GM10248 (cell line): ENCODE measurements at regions of chr5 and their contacts with region 1.

Region 1: GRCh38 chr5:107673368-107674136 is 2.8 kb upstream of the EFNA5 start:
- DNase-seq: peak; percentile 81
- CTCF ChIP-seq: peak; percentile 100

Region 2: DNA sequence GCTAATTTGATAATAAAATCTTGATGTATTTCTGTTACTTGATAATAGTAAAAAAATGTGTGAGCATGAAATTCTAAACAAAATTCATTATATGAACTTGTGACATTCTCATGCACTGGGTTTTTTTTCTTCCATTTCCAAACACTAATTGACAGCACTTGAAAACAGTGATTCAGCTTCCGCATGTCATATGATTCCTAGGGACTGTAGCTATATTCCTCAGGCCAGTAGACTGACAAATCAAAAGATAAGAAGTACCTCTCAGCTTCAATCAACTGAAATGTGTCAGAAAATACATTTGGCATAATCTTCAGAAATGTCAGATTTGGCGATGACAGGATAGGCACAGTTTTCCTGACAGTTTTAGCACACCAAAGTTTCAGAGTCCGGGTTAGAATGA is 55.3 kb before region 1 on chr5:
- CTCF ChIA-PET with region 1: no interaction called
- POLR2A ChIA-PET with region 1: no interaction called
- DNase-seq: no peak
- CTCF ChIP-seq: no peak

Region 3: DNA sequence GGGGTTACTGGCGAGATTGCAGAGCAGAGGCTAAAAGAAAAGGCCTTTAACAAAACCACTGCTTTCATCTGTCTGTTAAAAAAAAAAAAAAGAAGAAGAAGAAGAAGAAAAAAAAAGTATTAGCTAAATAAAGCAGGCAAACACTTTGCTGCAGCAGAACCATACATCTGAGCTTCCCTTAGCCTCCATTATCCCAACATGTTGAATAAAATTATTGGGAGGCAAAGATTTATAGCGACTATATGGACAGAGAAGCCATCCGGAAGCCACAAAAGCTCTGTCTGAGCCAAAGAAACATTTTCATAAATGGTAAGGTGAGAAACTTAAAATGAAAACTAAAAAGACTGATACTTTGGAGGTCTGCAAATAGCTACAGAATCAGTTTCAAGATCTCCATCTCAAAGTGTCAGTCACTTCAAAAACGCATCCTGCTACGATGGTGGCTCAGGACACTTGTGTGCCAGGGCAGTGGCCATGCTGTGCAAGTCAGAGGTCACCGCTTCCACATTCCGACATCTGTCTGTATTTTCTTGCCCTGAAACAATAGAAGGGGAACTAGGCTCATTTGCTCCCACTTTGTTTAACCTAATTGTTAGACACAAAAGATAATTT is 12.4 kb before region 1 on chr5:
- CTCF ChIA-PET with region 1: interaction called, 11 read pairs
- POLR2A ChIA-PET with region 1: no interaction called
- DNase-seq: no peak
- CTCF ChIP-seq: no peak